ENCODE measurements at regions of chr1 and their contacts with region 1.

Region 1: DNA sequence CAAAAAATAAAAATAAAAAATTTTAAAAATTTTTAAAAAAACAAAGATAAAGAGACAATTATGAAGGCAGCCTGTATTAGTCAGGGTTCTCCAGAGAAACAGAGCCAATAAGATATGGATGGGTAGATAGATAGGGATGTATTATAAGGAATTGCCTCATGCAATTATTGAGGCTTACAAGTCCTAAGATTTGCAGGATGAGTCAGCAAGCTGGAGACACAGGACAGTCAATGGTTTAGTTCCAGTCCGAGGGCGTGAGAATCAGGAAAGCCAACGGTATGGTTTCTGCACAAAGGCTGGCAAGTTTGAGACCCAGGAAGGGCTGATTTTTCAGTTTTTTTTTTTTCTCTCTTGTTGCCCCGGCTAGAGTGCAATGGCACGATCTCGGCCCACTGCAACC is 24.1 kb upstream of the EIF4G3 start:
- DNase-seq: no peak
- ATAC-seq: no peak
- H3K4me3 ChIP-seq: no peak overlapping the region
- H3K27ac ChIP-seq: no peak overlapping the region
- H3K4me1 ChIP-seq: no peaks in the 10 kb centered on the region
- H3K27me3 ChIP-seq: no peaks in the 10 kb centered on the region
- CTCF ChIP-seq: no peak
- EP300 ChIP-seq: no peak
- POLR2A ChIP-seq: no peak
- RAD21 ChIP-seq: no peak

Region 2: DNA sequence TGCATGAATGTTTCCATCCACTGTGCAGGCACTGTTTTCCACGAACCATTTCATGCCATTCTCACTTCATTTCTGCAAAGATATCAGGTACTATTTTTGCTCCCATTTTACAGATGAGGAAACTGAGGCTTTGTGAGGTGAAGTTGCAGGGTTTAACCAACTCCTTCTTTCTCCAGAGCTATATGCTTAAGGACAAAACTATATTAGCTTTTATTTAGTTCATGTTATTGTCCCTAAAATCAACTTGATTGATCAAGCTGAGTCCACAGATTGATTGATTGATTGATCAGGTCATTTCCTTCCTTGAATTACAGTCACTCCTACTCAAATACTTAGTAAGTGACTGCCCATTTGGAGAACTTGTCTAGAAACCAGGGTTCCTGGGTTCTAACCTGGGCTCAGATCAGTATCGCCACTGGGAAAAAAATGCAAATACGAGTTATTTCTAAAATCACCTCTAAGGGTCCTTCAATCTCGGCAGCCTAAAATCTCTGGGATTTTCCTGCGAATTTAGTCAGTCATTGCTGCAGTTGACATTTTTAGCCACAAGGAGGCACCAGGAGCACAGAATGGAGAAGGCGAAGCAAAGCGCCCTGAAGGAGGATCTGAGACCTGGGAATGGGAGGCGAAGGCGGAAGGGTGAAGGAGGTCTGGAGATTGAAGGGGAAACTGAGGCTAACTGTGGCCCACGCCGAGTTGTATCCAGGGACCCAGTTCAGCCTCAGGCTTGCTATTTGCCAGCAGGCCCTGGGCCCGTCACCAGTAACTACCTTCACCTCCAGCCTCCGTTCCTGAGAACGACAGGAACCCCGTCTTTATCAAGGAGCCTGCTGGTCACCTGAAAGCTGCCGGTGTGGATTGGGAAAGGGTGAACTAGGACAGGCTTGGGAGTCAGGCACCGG is 678.6 kb before region 1 on chr1:
- CTCF ChIA-PET with region 1: interaction called, 5 read pairs
- POLR2A ChIA-PET with region 1: no interaction called
- RAD21 ChIA-PET with region 1: no interaction called
- SMC1A ChIA-PET with region 1: no interaction called
- in situ Hi-C with region 1: no loop called
- intact Hi-C with region 1: loop called (anchors 5 kb)
- DNase-seq: peak; percentile 20
- ATAC-seq: peak; percentile 62
- H3K4me3 ChIP-seq: no peak overlapping the region
- H3K27ac ChIP-seq: no peak overlapping the region
- H3K4me1 ChIP-seq: no peaks in the 10 kb centered on the region
- H3K27me3 ChIP-seq: no peaks in the 10 kb centered on the region; a peak in 1 of 4 replicates
- CTCF ChIP-seq: peak; percentile 85 to 89 (median 87)
- EP300 ChIP-seq: no peak
- POLR2A ChIP-seq: no peak
- RAD21 ChIP-seq: peak; percentile 93

Region 3: DNA sequence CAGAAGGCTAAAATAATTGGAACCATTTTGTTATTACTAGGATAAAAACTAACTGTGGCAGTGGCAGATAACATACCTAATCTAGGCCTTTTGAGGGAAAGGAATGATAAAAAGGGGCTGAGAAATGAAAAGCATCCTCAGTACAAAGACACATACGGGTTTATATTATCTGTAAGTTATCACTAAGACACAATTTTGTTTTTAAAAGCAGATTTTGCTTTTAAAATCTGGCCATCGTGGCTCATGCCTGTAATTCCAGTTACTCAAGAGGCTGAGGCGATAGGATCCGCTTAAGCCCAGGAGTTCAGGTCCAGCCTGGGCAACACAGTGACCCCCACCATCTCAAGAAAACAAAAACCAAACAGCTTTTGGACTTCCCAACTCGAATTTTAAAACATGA is 388.9 kb before region 1 on chr1:
- CTCF ChIA-PET with region 1: interaction called, 10 read pairs
- POLR2A ChIA-PET with region 1: no interaction called
- RAD21 ChIA-PET with region 1: no interaction called
- SMC1A ChIA-PET with region 1: no interaction called
- in situ Hi-C with region 1: no loop called
- intact Hi-C with region 1: no loop called
- DNase-seq: no peak
- ATAC-seq: no peak
- H3K4me3 ChIP-seq: no peak overlapping the region
- H3K27ac ChIP-seq: no peak overlapping the region
- H3K4me1 ChIP-seq: no peaks in the 10 kb centered on the region
- H3K27me3 ChIP-seq: no peaks in the 10 kb centered on the region
- CTCF ChIP-seq: no peak
- EP300 ChIP-seq: no peak
- POLR2A ChIP-seq: no peak
- RAD21 ChIP-seq: no peak

Region 4: GRCh38 chr1:20974069-20974468 is 226.7 kb before region 1 on chr1:
- CTCF ChIA-PET with region 1: interaction called, 98 read pairs
- POLR2A ChIA-PET with region 1: no interaction called
- RAD21 ChIA-PET with region 1: no interaction called
- SMC1A ChIA-PET with region 1: no interaction called
- in situ Hi-C with region 1: no loop called
- intact Hi-C with region 1: no loop called
- DNase-seq: no peak
- ATAC-seq: no peak
- H3K4me3 ChIP-seq: no peak overlapping the region
- H3K27ac ChIP-seq: no peak overlapping the region
- H3K4me1 ChIP-seq: no peaks in the 10 kb centered on the region
- H3K27me3 ChIP-seq: no peaks in the 10 kb centered on the region
- CTCF ChIP-seq: no peak
- EP300 ChIP-seq: no peak
- POLR2A ChIP-seq: no peak
- RAD21 ChIP-seq: no peak

Region 5: DNA sequence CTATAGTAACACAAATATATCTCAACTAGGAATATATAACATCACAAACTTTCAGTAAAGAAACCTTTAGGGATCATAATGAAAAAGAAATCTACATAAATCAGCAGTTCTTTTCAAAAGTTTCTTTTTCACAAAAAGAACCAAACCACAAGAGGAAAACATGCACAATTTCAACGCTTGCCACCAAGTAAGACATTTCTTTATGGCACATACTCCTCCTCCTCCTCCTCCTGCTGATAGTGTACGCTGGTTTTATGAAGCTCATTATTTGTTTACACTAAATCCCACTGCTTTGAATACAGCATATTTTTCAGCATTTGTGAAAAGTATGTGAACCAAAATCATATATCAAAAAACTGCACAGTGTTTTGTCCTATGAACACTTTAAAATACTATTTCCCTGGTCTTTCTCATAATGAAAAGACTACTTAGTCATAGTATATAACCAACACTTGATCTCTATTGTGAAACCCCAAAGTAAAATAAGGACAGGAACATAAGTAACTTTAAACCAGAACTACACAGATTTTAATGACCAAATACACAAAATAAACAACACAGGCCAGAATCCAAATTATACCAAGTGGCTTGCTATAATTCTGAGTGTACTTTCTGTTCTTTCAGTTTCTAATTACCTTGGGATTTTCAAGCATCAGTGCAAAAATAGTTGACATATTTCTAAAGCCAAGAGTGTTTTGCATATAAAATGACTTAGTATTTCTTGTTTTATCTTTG is 208.3 kb before region 1 on chr1:
- CTCF ChIA-PET with region 1: interaction called, 64 read pairs
- POLR2A ChIA-PET with region 1: no interaction called
- RAD21 ChIA-PET with region 1: interaction called, 8 read pairs
- SMC1A ChIA-PET with region 1: interaction called, 17 read pairs
- in situ Hi-C with region 1: loop called (anchors 10 kb)
- intact Hi-C with region 1: no loop called
- DNase-seq: no peak
- ATAC-seq: peak; percentile 72
- H3K4me3 ChIP-seq: 0 out of 2 replicates have a peak overlapping the region, but pooled peaks have one; percentile 2
- H3K27ac ChIP-seq: peak overlapping the region; percentile 37; the same call in 1 of the 2 replicates
- H3K4me1 ChIP-seq: peaks cover 15% of the 10 kb centered on the region
- H3K27me3 ChIP-seq: no peaks in the 10 kb centered on the region
- CTCF ChIP-seq: no peak
- EP300 ChIP-seq: no peak
- POLR2A ChIP-seq: no peak
- RAD21 ChIP-seq: no peak

Region 6: DNA sequence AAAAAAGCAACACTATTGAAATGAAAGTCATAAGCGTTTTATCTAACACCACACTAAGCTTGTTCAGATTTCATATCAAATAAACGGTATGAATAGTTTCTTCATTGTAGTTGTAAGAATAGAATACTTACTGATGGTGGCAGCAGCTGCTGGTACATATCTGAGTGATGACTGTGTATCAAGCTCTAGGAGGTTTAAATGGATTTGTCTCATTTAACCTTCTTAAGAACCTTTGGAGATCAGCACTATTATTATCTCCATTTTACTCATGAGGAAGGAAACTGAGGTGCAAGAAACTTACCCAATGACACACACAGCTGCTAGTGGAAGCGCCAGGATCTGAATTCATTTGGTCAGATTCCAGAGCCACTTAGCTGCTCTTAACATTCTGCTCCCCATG is 128.0 kb before region 1 on chr1:
- CTCF ChIA-PET with region 1: interaction called, 10 read pairs
- POLR2A ChIA-PET with region 1: no interaction called
- RAD21 ChIA-PET with region 1: no interaction called
- SMC1A ChIA-PET with region 1: no interaction called
- in situ Hi-C with region 1: no loop called
- intact Hi-C with region 1: no loop called
- DNase-seq: no peak
- ATAC-seq: no peak
- H3K4me3 ChIP-seq: no peak overlapping the region
- H3K27ac ChIP-seq: no peak overlapping the region
- H3K4me1 ChIP-seq: peaks cover 3% of the 10 kb centered on the region; the same call in 1 of the 2 replicates
- H3K27me3 ChIP-seq: no peaks in the 10 kb centered on the region
- CTCF ChIP-seq: no peak
- EP300 ChIP-seq: no peak
- POLR2A ChIP-seq: no peak
- RAD21 ChIP-seq: no peak

Region 7: DNA sequence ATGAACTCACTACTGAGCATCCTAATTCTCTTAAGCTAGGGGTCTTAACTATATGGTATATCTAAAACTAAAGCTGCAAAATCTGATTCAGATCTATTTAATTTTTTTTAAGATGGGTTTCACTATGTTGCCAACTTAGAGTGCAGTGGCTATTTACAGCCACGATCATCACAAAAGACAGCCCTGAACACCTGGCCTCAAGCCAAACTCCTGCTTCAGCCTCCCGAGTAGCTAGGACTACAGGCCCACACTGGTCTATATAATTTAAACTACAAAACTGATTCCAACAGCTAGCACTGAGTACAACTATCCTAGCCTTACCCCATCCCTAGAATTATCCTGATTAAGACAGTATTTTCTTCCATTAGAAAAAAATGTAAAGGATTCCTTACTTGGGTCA is 61.2 kb before region 1 on chr1:
- CTCF ChIA-PET with region 1: no interaction called
- POLR2A ChIA-PET with region 1: no interaction called
- RAD21 ChIA-PET with region 1: no interaction called
- SMC1A ChIA-PET with region 1: no interaction called
- in situ Hi-C with region 1: no loop called
- intact Hi-C with region 1: no loop called
- DNase-seq: no peak
- ATAC-seq: no peak
- H3K4me3 ChIP-seq: no peak overlapping the region
- H3K27ac ChIP-seq: no peak overlapping the region
- H3K4me1 ChIP-seq: no peaks in the 10 kb centered on the region
- H3K27me3 ChIP-seq: no peaks in the 10 kb centered on the region
- CTCF ChIP-seq: no peak
- EP300 ChIP-seq: no peak
- POLR2A ChIP-seq: no peak
- RAD21 ChIP-seq: no peak

Region 8: GRCh38 chr1:21184276-21184675 is 16.5 kb before region 1 on chr1:
- CTCF ChIA-PET with region 1: interaction called, 35 read pairs
- POLR2A ChIA-PET with region 1: no interaction called
- RAD21 ChIA-PET with region 1: interaction called, 14 read pairs
- SMC1A ChIA-PET with region 1: interaction called, 20 read pairs
- in situ Hi-C with region 1: no loop called
- intact Hi-C with region 1: no loop called
- DNase-seq: no peak
- ATAC-seq: peak; percentile 70
- H3K4me3 ChIP-seq: no peak overlapping the region
- H3K27ac ChIP-seq: no peak overlapping the region
- H3K4me1 ChIP-seq: peaks cover 3% of the 10 kb centered on the region; the same call in 1 of the 2 replicates
- H3K27me3 ChIP-seq: no peaks in the 10 kb centered on the region
- CTCF ChIP-seq: no peak
- EP300 ChIP-seq: no peak
- POLR2A ChIP-seq: no peak
- RAD21 ChIP-seq: no peak